ENCODE measurements at regions of chr10 and their contacts with region 1.

Region 1: GRCh38 chr10:100481462-100482081 is 18.8 kb downstream of the WNT8B start:
- DNase-seq: no peak
- H3K4me3 ChIP-seq: peak overlapping the region; percentile 53
- CTCF ChIP-seq: no peak

Region 2: DNA sequence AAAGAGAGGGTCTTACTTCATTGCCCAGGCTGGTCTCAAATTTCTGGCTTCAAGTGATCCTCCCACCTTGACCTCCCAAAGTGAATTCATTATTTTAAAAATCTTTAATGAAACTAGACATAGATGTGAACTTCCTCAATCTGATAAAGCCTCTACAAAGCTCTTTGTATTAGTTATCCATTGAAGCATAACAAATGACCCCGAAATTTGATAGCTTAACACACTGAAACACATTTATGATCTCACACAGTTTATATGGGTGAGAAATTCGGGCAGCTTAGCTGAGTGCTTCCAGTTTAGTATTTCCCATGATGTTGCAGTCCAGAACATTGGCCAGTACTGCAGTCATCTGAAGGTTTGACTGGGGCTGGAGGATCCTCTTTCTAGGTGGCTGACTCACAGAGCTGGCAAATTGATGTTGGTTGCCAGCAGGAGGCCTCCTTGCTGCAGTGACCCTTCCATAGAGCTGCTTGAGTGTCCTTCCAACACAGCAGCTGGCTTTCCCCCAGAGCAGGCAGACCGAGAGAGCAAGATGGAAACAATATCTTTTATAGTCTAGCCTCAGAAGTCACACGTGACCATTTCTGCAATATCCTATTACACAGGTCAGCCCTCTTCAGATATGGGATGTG is 35.3 kb before region 1 on chr10:
- CTCF ChIA-PET with region 1: interaction called, 14 read pairs
- POLR2A ChIA-PET with region 1: no interaction called
- DNase-seq: no peak
- H3K4me3 ChIP-seq: no peak overlapping the region
- CTCF ChIP-seq: no peak

Region 3: DNA sequence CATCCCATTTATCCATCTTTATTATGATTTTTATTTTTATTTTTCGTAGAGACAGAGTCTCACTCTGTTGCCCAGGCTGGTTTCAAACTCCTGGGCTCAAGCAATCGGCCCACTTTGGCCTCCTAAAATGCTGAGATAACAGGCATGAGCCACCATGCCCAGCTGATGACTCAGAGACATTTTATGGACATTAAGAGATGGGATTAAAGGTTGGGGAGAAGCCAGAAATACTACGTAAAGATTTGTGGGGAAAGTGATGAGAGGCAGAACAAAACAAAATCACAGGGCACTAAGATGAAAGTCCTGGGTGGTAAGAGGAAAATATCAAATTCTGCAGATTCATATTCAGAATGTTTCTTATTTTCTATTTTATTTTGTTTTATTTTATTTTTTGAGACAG is 11.2 kb before region 1 on chr10:
- CTCF ChIA-PET with region 1: interaction called, 85 read pairs
- POLR2A ChIA-PET with region 1: no interaction called
- DNase-seq: no peak
- H3K4me3 ChIP-seq: no peak overlapping the region
- CTCF ChIP-seq: no peak